ENCODE measurements at regions of chr3 and their contacts with region 1.

Region 1: GRCh38 chr3:120147072-120147871 is 53.0 kb upstream of the GSK3B start:
- DNase-seq: peak; percentile 85
- ATAC-seq: peak; percentile 58
- H3K4me3 ChIP-seq: peak overlapping the region; percentile 22; the same call in 1 of the 2 replicates
- H3K27ac ChIP-seq: peak overlapping the region; percentile 52
- H3K4me1 ChIP-seq: peaks cover 55% of the 10 kb centered on the region
- H3K27me3 ChIP-seq: no peaks in the 10 kb centered on the region
- CTCF ChIP-seq: peak; percentile 54; the same call in 1 of the 2 replicates

Region 2: GRCh38 chr3:120160050-120160449 is 12.8 kb after region 1 on chr3:
- CTCF ChIA-PET with region 1: interaction called, 6 read pairs
- POLR2A ChIA-PET with region 1: interaction called, 3 read pairs
- intact Hi-C with region 1: loop called (anchors 2 kb)
- DNase-seq: peak; percentile 99
- ATAC-seq: peak; percentile 88
- H3K4me3 ChIP-seq: no peak overlapping the region
- H3K27ac ChIP-seq: peak overlapping the region; percentile 69
- H3K4me1 ChIP-seq: peaks cover 26% of the 10 kb centered on the region
- H3K27me3 ChIP-seq: no peaks in the 10 kb centered on the region
- CTCF ChIP-seq: no peak

Region 3: GRCh38 chr3:120170223-120170622 is 23.0 kb after region 1 on chr3:
- CTCF ChIA-PET with region 1: no interaction called
- POLR2A ChIA-PET with region 1: interaction called, 36 read pairs
- intact Hi-C with region 1: no loop called
- DNase-seq: peak; percentile 98
- ATAC-seq: peak; percentile 99
- H3K4me3 ChIP-seq: 0 out of 2 replicates have a peak overlapping the region, but pooled peaks have one; percentile 8
- H3K27ac ChIP-seq: peak overlapping the region; percentile 71
- H3K4me1 ChIP-seq: peaks cover 31% of the 10 kb centered on the region
- H3K27me3 ChIP-seq: no peaks in the 10 kb centered on the region
- CTCF ChIP-seq: no peak

Region 4: GRCh38 chr3:120177151-120177550 is 29.9 kb after region 1 on chr3:
- CTCF ChIA-PET with region 1: no interaction called
- POLR2A ChIA-PET with region 1: interaction called, 36 read pairs
- intact Hi-C with region 1: loop called (anchors 2 kb)
- DNase-seq: peak; percentile 93
- ATAC-seq: peak; percentile 95
- H3K4me3 ChIP-seq: peak overlapping the region; percentile 42
- H3K27ac ChIP-seq: peak overlapping the region; percentile 61
- H3K4me1 ChIP-seq: peaks cover 40% of the 10 kb centered on the region
- H3K27me3 ChIP-seq: no peaks in the 10 kb centered on the region
- CTCF ChIP-seq: no peak